ENCODE measurements at regions of chr13 and their contacts with region 1.

Region 1: DNA sequence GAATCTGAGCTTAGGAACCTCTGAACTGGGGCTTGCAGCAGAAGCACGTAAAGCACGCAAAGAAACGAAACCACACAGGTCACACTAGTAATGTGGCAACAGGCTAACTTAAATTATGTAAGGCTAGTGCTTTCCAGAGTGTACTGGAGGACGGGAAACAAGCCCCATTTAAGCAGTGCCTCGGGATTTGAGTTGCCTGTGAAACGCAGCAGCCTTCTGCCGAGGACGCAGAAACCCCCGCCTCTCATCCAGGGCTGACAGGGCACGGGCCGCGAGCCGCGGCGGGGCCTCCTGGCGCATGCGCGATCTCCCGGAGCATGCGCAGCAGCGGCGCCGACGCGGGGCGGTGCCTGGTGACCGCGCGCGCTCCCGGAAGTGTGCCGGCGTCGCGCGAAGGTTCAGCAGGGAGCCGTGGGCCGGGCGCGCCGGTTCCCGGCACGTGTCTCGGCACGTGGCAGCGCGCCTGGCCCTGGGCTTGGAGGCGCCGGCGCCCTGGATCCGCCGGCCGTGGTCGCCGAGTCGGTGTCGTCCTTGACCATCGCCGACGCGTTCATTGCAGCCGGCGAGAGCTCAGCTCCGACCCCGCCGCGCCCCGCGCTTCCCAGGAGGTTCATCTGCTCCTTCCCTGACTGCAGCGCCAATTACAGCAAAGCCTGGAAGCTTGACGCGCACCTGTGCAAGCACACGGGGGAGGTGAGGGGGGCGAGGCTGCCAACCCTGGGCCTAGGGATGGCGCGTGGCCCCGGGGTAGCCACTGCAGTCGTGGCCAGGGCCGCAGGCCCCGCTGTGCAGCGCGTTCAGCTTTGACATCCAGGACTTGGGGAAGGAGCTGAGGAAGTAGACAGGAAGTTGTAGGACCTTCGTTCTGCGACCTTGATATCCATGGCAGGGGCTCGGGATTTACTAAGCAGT is at the start of gene GTF3A:
- DNase-seq: peak; percentile 84 to 92 (median 90)
- H3K4me3 ChIP-seq: peak within 1 kb of the TSS; percentile 33 to 93 (median 80)
- H3K27ac ChIP-seq: peak within 1 kb of the TSS; percentile 77 to 85
- H3K4me1 ChIP-seq: peaks cover 32 to 58% (median 46%) of the 10 kb centered on the region in 4 experiments
- H3K27me3 ChIP-seq: no peaks in the 10 kb centered on the region

Region 2: DNA sequence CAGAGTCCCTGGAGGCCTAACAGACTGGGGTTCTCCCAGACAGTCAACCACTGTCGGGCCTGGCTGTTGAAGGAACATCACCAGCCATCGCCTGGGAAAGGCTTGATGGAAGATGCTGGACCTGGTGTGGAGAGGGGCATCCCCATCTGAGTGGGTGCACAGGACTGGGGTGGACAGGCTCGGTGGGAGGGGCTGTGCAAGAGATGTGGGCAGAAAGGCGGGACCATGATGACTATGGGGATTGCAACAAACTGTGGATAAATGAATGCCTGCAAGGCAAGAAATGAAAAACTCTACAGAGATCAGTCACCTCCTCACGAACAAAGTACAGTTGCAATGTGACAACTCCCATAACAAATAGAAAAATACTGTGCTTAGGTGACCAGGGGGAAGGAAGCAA is 492.1 kb before region 1 on chr13:
- CTCF ChIA-PET with region 1: no interaction called
- POLR2A ChIA-PET with region 1: no interaction called
- DNase-seq: no peak
- H3K4me3 ChIP-seq: no peak overlapping the region
- H3K27ac ChIP-seq: no peak overlapping the region
- H3K4me1 ChIP-seq: peaks cover 0 to 5% (median 2%) of the 10 kb centered on the region in 4 experiments
- H3K27me3 ChIP-seq: peaks cover 0 to 2% (median 0%) of the 10 kb centered on the region in 5 experiments

Region 3: GRCh38 chr13:27401210-27401609 is 23.3 kb before region 1 on chr13:
- CTCF ChIA-PET with region 1: interaction called, 18 read pairs
- POLR2A ChIA-PET with region 1: interaction called, 11 read pairs
- DNase-seq: peak; percentile 56 to 86 (median 75)
- H3K4me3 ChIP-seq: peak overlapping the region in 1 of 7 experiments; percentile 25
- H3K27ac ChIP-seq: no peak overlapping the region
- H3K4me1 ChIP-seq: peaks cover 4 to 42% (median 27%) of the 10 kb centered on the region in 4 experiments
- H3K27me3 ChIP-seq: no peaks in the 10 kb centered on the region

Region 4: DNA sequence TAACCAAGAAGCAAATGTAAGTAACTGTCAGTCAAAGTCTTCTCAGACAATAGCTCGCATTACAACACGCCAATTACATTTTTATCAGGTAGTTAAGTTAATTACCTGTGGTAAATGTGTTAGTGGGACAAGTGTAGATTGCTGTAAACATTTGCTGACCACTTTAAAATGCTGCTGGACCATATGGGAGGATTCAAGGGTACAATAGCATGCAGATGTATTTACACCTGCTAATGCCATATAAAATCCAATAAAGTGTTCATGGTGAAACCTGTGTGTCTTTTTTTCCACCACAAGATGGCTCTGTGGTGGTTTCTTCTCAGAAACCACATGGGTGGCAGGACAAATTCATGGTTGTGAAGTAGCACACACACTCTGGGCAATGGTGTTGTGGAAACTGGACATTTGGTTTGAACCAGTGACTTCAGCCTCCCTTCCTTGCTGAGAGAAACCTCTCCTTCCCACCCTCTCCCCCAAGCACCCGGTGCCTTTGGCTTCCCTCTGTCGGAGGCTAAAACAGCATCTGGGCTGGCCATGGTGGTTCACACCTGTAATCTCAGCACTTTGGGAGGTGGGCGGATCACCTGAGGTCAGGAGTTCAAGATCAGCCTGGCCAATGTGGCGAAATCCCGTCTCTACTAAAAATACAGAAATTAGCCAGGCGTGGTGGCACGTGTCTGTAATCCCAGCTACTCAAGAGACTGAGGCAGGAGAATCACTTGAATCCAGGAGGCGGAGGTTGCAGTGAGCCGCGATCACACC is 18.1 kb before region 1 on chr13:
- CTCF ChIA-PET with region 1: interaction called, 27 read pairs
- POLR2A ChIA-PET with region 1: interaction called, 11 read pairs
- DNase-seq: peak; percentile 49 to 71 (median 67)
- H3K4me3 ChIP-seq: no peak overlapping the region
- H3K27ac ChIP-seq: no peak overlapping the region
- H3K4me1 ChIP-seq: peaks cover 0 to 41% (median 19%) of the 10 kb centered on the region in 4 experiments
- H3K27me3 ChIP-seq: no peaks in the 10 kb centered on the region

Region 5: GRCh38 chr13:27442071-27442647 is 17.7 kb after region 1 on chr13:
- CTCF ChIA-PET with region 1: interaction called, 56 read pairs
- POLR2A ChIA-PET with region 1: interaction called, 7 read pairs
- DNase-seq: peak; percentile 44 to 64 (median 56)
- H3K4me3 ChIP-seq: peak overlapping the region in 3 of 7 experiments; percentile 37 to 53 (median 47)
- H3K27ac ChIP-seq: peak overlapping the region in 1 of 2 experiments; percentile 72
- H3K4me1 ChIP-seq: peaks cover 31 to 73% (median 55%) of the 10 kb centered on the region in 4 experiments
- H3K27me3 ChIP-seq: no peaks in the 10 kb centered on the region

Region 6: DNA sequence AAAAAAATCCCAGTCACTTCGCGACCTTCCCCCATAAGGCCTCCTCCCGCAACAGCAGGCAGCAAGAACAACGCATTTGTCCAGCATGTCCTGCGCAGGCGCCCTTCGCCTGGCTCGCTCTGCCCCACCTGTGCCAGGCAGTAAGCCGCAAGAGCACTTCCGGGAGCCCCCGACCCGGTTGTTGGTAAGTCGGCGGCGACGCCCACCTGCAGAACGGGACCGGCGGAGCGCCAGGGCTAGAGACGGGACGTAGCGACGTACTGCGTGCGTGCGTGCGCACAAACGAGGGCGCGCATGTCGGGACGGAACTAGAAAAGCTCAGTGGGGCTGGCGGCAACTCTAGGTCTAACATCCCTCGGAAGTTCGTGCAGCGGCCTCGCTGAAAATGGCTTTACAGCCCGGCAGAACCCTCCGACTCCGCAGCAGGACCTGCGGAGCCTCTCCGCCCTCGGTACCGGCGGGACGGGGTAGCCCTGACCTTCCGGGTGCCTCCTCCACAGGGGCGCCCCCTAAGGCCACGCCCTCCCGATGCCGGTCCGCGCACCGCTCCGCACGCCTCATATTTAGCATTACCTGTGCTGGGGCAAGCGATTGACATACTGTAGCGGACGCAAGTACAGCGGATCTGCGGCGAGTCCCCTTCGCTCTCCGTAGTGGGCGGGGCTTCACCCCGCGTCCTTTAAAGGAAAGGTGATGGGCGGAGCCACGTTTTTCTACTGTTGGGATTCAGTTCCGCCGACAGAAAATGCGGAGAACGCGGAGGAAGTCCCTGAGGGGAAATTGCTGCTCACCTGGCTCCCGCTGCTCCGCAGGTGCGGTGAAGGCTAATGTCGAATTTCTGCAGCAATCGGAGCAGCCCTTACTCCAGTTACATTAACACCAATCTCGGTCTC is 25.7 kb after region 1 on chr13 and contains the start of gene MTIF3:
- CTCF ChIA-PET with region 1: interaction called, 56 read pairs
- POLR2A ChIA-PET with region 1: interaction called, 29 read pairs
- DNase-seq: peak; percentile 96 to 99 (median 98)
- H3K4me3 ChIP-seq: peak within 1 kb of the TSS; percentile 71 to 97 (median 89)
- H3K27ac ChIP-seq: peak within 1 kb of the TSS; percentile 86 to 92
- H3K4me1 ChIP-seq: peaks cover 40 to 63% (median 53%) of the 10 kb centered on the region in 4 experiments
- H3K27me3 ChIP-seq: no peaks in the 10 kb centered on the region

Region 7: GRCh38 chr13:27461940-27462584 is 37.6 kb after region 1 on chr13:
- CTCF ChIA-PET with region 1: no interaction called
- POLR2A ChIA-PET with region 1: no interaction called
- DNase-seq: no peak
- H3K4me3 ChIP-seq: no peak overlapping the region
- H3K27ac ChIP-seq: no peak overlapping the region
- H3K4me1 ChIP-seq: peaks cover 0 to 8% (median 5%) of the 10 kb centered on the region in 4 experiments
- H3K27me3 ChIP-seq: no peaks in the 10 kb centered on the region